MCF 10A (cell line): ENCODE measurements at regions of chr1 and their contacts with region 1.

Region 1: GRCh38 chr1:27365372-27366112 is 1.2 kb downstream of the MAP3K6 start:
- DNase-seq: peak; percentile 89
- H3K4me3 Mint-ChIP-seq: peak overlapping the region; percentile 85
- H3K27ac Mint-ChIP-seq: peak overlapping the region; percentile 96
- H3K4me1 Mint-ChIP-seq: peaks cover 12% of the 10 kb centered on the region
- H3K27me3 Mint-ChIP-seq: no peaks in the 10 kb centered on the region
- CTCF ChIP-seq: no peak

Region 2: DNA sequence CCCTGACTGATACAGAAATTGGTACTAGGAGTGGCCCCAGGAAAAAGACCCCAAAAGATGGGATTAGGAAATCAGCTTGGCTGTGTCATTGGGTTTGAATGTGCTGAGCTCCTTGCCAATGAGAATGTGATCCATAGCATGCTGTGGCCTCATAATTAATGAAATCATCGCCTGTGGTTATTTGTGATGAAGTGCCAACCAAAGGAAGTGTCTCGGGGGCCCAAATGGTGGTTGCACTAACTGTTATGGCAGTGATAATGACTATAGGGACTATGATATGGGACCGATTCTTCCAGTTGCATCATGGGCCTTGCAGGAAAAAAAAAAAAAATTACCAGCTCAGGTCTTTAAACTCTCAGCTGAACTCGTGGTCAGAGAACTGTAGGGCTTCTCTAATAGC is 554.5 kb before region 1 on chr1:
- CTCF ChIA-PET with region 1: no interaction called
- POLR2A ChIA-PET with region 1: no interaction called
- intact Hi-C with region 1: no loop called
- DNase-seq: no peak
- H3K4me3 Mint-ChIP-seq: no peak overlapping the region
- H3K27ac Mint-ChIP-seq: peak overlapping the region; percentile 39
- H3K4me1 Mint-ChIP-seq: peaks cover 6% of the 10 kb centered on the region
- H3K27me3 Mint-ChIP-seq: no peaks in the 10 kb centered on the region
- CTCF ChIP-seq: no peak

Region 3: GRCh38 chr1:27203946-27204345 is 161.6 kb before region 1 on chr1:
- CTCF ChIA-PET with region 1: no interaction called
- POLR2A ChIA-PET with region 1: no interaction called
- intact Hi-C with region 1: no loop called
- DNase-seq: no peak
- H3K4me3 Mint-ChIP-seq: no peak overlapping the region
- H3K27ac Mint-ChIP-seq: no peak overlapping the region
- H3K4me1 Mint-ChIP-seq: no peaks in the 10 kb centered on the region
- H3K27me3 Mint-ChIP-seq: no peaks in the 10 kb centered on the region
- CTCF ChIP-seq: no peak

Region 4: GRCh38 chr1:27321813-27322577 is 43.5 kb before region 1 on chr1 and contains the start of gene TMEM222:
- CTCF ChIA-PET with region 1: interaction called, 9 read pairs
- POLR2A ChIA-PET with region 1: interaction called, 21 read pairs
- intact Hi-C with region 1: no loop called
- DNase-seq: peak; percentile 96
- H3K4me3 Mint-ChIP-seq: peak within 1 kb of the TSS; percentile 91
- H3K27ac Mint-ChIP-seq: peak within 1 kb of the TSS; percentile 94
- H3K4me1 Mint-ChIP-seq: peaks cover 5% of the 10 kb centered on the region
- H3K27me3 Mint-ChIP-seq: no peaks in the 10 kb centered on the region
- CTCF ChIP-seq: no peak
- total RNA-seq, gene TMEM222: 36.9 and 38.3 TPM in 2 replicates

Region 5: GRCh38 chr1:27332536-27333281 is 32.8 kb before region 1 on chr1:
- CTCF ChIA-PET with region 1: interaction called, 27 read pairs
- POLR2A ChIA-PET with region 1: interaction called, 9 read pairs
- intact Hi-C with region 1: no loop called
- DNase-seq: peak; percentile 56
- H3K4me3 Mint-ChIP-seq: no peak overlapping the region
- H3K27ac Mint-ChIP-seq: peak overlapping the region; percentile 35
- H3K4me1 Mint-ChIP-seq: peaks cover 9% of the 10 kb centered on the region
- H3K27me3 Mint-ChIP-seq: no peaks in the 10 kb centered on the region
- CTCF ChIP-seq: peak; percentile 75

Region 6: GRCh38 chr1:27341525-27342252 is 23.9 kb before region 1 on chr1 and contains the start of gene SYTL1:
- CTCF ChIA-PET with region 1: interaction called, 7 read pairs
- POLR2A ChIA-PET with region 1: interaction called, 78 read pairs
- intact Hi-C with region 1: loop called (anchors 1 kb)
- DNase-seq: peak; percentile 89
- H3K4me3 Mint-ChIP-seq: peak within 1 kb of the TSS; percentile 82
- H3K27ac Mint-ChIP-seq: peak within 1 kb of the TSS; percentile 95
- H3K4me1 Mint-ChIP-seq: peaks cover 46% of the 10 kb centered on the region
- H3K27me3 Mint-ChIP-seq: no peaks in the 10 kb centered on the region
- CTCF ChIP-seq: no peak
- total RNA-seq, gene SYTL1: 64.8 and 81.8 TPM in 2 replicates

Region 7: GRCh38 chr1:27349784-27350662 is 15.5 kb before region 1 on chr1:
- CTCF ChIA-PET with region 1: interaction called, 7 read pairs
- POLR2A ChIA-PET with region 1: interaction called, 27 read pairs
- intact Hi-C with region 1: no loop called
- DNase-seq: no peak
- H3K4me3 Mint-ChIP-seq: no peak overlapping the region
- H3K27ac Mint-ChIP-seq: no peak overlapping the region
- H3K4me1 Mint-ChIP-seq: peaks cover 19% of the 10 kb centered on the region
- H3K27me3 Mint-ChIP-seq: no peaks in the 10 kb centered on the region
- CTCF ChIP-seq: no peak

Region 8: DNA sequence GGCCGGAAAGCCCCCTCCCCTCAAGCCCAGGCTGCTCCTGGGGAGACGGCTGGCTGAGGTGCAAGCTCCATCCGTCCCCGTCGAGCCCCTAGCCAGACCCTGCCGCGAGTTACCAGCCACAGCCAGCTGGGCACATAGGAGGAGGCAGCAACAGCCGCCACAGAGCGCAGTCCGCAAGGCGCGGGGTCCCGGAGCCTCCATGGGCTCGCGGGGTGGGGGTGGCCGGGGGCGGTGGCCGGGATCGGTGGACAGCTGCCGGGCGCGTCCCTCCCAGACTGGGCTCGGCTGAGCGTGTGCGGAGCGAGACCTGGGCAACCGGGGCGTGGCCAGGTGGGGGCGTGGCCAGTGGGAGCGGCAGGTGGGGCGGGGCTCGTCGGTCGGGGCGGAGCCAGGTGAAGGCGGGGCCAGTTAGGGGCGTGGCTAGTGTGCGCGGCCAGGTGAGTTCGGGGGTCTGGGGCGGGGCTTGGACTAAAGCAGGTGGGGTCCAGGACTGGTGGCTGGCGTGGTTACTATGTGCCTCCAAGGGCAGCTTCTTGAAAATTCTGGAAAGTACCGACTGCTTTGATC is 17.6 kb after region 1 on chr1 and contains the start of gene CD164L2:
- CTCF ChIA-PET with region 1: interaction called, 21 read pairs
- POLR2A ChIA-PET with region 1: interaction called, 29 read pairs
- intact Hi-C with region 1: loop called (anchors 2 kb)
- DNase-seq: peak; percentile 69
- H3K4me3 Mint-ChIP-seq: peak within 1 kb of the TSS; percentile 28
- H3K27ac Mint-ChIP-seq: no peak within 1 kb of the TSS
- H3K4me1 Mint-ChIP-seq: peaks cover 12% of the 10 kb centered on the region
- H3K27me3 Mint-ChIP-seq: no peaks in the 10 kb centered on the region
- CTCF ChIP-seq: no peak
- total RNA-seq, gene CD164L2: 0.23 TPM in 1 of 2 replicates, not detected in the other